Activated CD4-positive, alpha-beta T cell treated with anti-CD3 and anti-CD28 coated beads, Interleukin-2, amount 10 ng/mL, durations not matched to agents 24 days and 14 days (primary cell): ENCODE measurements at regions of chr17 and their contacts with region 1.

Region 1: DNA sequence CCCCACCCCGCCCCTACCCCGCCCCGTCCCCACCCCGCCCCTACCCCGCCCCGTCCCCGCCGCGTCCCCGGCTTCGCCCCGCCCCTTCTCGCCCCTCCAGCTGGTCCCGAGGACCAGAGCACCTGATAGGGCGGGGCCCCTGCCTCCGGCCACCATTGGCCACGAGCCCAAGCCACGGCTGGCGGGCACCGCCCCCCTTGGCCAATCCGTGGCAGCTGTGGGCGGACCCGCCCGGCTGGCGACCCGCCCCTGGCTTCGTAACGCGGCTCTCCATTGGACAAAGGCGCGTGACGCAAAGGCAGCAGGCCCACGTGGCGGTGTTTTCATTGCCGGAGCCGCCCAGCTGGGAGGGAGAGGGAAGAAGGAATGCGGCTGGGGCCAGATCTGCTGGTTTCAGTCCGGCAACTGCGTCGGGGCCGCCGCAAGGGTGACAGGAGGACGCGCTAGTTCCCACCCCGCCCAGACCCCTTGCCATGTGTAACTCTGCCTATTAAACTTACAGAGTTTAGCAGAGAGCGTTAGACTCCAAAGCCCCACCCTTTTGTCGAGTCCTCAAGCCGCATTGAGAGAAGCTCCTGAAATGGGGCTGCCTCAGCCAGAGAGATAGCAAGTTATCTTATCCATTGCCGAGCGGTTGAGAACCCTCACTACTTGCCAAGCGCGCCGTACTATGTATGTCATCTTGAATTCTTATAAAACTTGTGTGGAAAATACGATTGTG is 403 bp upstream of the WIPI1 start:
- DNase-seq: peak; percentile 100
- H3K4me3 Mint-ChIP-seq: peak overlapping the region; percentile 92
- H3K27ac Mint-ChIP-seq: peak overlapping the region; percentile 86
- H3K4me1 Mint-ChIP-seq: peaks cover 61% of the 10 kb centered on the region
- H3K27me3 Mint-ChIP-seq: no peaks in the 10 kb centered on the region

Region 2: DNA sequence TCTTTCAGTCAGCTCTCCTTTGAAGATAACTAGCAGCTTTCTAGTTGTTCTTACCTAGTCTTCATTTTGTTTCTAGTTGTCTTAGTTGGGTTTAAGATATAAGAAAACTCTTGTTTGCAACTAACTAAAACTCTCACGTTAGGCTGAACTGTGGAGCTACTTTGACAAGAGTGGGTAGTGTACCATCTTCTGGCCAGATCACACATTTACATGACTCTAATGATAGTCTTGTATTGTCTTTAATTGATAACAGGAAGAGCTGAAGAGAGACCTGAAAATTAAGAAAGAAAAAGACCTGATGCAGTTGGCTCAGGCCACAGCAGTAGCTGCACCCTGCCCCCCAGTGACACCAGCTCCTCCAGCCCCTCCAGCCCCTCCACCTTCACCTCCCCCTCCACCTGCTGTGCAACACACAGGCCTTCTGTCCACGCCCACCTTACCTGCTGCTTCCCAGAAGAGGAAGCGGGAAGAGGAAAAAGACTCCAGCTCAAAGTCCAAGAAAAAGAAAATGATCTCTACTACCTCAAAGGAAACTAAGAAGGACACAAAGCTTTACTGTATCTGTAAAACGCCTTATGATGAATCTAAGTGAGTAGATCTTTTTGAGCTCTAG is 498.3 kb before region 1 on chr17:
- intact Hi-C with region 1: loop called (anchors 5 kb)
- DNase-seq: no peak
- H3K4me3 Mint-ChIP-seq: no peak overlapping the region
- H3K27ac Mint-ChIP-seq: peak overlapping the region; percentile 30
- H3K4me1 Mint-ChIP-seq: peaks cover 7% of the 10 kb centered on the region
- H3K27me3 Mint-ChIP-seq: no peaks in the 10 kb centered on the region

Region 3: DNA sequence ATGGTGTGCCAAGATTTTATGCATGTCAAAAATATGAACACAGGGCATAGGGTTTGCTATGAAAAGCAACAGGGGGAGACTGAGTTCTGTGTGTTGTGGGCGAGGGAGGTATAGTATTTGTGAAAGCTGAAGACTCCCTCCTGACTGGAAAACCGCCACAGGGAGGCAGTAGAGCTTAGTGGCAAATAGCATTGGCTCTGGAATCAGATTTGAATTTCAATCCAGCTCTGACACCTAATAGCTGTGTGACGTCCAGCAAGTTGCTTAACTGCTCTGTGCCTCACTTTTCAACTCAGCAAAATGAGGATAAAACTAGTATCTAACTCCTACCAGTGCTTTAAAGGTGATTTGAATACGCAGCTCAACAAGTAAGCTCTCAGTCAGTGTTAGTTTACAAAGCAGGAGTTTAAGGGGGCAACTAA is 400.2 kb before region 1 on chr17:
- intact Hi-C with region 1: loop called (anchors 5 kb)
- DNase-seq: peak; percentile 83
- H3K4me3 Mint-ChIP-seq: no peak overlapping the region
- H3K27ac Mint-ChIP-seq: no peak overlapping the region
- H3K4me1 Mint-ChIP-seq: peaks cover 10% of the 10 kb centered on the region
- H3K27me3 Mint-ChIP-seq: peaks cover 7% of the 10 kb centered on the region

Region 4: GRCh38 chr17:68179926-68180285 is 277.8 kb before region 1 on chr17:
- intact Hi-C with region 1: loop called (anchors 2 kb)
- DNase-seq: no peak
- H3K4me3 Mint-ChIP-seq: no peak overlapping the region
- H3K27ac Mint-ChIP-seq: no peak overlapping the region
- H3K4me1 Mint-ChIP-seq: peaks cover 35% of the 10 kb centered on the region
- H3K27me3 Mint-ChIP-seq: no peaks in the 10 kb centered on the region

Region 5: DNA sequence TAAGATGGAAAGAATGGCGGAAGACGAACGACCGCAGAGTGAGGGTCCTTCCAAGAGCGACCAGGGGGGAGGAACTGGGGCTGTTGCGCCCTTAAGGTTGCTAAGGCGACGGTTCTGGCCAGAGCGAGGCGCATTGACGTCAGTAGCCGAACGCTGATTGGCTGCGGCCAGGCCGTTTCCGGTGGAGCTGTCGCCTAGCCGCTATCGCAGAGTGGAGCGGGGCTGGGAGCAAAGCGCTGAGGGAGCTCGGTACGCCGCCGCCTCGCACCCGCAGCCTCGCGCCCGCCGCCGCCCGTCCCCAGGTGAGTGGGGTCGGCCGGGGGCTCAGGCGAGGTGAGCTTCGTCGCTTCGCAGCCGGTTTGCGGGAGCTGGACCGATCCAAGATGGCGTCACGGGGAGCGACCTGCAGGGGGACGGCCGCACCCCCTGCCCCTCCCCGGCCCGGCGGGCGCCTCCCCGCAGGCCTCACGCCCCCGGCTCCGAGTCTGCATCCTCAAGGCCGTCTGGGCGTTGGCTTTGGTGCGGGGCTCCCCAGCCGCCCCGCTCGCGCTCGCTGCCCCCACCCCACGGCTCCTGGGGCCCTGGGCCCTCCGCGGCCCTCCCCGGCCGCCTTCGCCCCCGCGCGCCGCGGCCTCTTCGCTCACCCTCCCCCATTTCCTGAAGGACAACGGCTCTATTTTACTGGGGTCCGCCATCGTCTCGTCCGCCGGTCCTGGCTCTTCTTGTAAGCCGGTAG is 54.7 kb after region 1 on chr17 and contains the start of gene PRKAR1A:
- intact Hi-C with region 1: loop called (anchors 2 kb)
- DNase-seq: peak; percentile 98
- H3K4me3 Mint-ChIP-seq: peak within 1 kb of the TSS; percentile 99
- H3K27ac Mint-ChIP-seq: peak within 1 kb of the TSS; percentile 99
- H3K4me1 Mint-ChIP-seq: peaks cover 61% of the 10 kb centered on the region
- H3K27me3 Mint-ChIP-seq: no peaks in the 10 kb centered on the region
- total RNA-seq, gene PRKAR1A: 194 and 207 TPM in 2 replicates

Region 6: DNA sequence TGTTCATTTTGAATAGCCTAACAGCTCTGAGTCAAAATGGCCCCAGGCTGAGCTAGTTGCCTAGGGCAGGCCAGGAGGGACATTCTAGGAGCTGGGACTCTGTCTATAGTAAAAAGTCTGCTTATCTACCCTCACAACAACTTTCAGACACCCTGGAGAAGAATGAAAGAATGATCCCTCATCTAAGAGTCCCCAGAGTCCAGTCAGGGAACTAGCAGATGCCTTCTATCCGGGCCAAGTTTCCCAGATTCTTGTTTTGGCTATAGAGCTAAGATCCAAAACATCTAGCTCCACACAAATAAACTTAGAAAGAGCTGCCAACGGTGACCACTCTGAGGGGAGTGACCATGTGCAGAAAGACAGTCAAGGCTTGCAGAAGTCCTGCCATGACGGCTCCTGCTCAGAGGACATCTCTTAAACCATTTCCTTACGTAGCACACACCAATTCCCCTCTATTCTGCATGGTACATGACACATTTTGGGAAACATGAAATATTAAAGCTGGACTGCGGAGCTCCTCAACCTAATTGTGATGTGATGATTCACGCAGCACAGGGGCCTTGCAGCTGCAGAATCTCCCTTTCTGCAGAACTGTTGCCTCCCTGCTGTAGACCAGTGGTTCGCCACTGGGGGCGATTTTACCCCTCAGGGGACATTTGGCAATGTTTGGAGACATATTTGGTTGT is 119.3 kb after region 1 on chr17:
- intact Hi-C with region 1: no loop called
- DNase-seq: no peak
- H3K4me3 Mint-ChIP-seq: no peak overlapping the region
- H3K27ac Mint-ChIP-seq: no peak overlapping the region
- H3K4me1 Mint-ChIP-seq: no peaks in the 10 kb centered on the region
- H3K27me3 Mint-ChIP-seq: peaks cover 9% of the 10 kb centered on the region